Activated CD8-positive, alpha-beta T cell treated with anti-CD3 and anti-CD28 coated beads, Interleukin-2, amount 10 ng/mL, durations not matched to agents 7 days and 5 days (primary cell): ENCODE measurements at regions of chr12 and their contacts with region 1.

Region 1: GRCh38 chr12:98754095-98754494 is 109.0 kb downstream of the APAF1 start:
- DNase-seq: no peak
- ATAC-seq: peak; percentile 51
- H3K4me3 Mint-ChIP-seq: no peak overlapping the region
- H3K27ac Mint-ChIP-seq: no peak overlapping the region
- H3K4me1 Mint-ChIP-seq: no peaks in the 10 kb centered on the region
- H3K27me3 Mint-ChIP-seq: peaks cover 5% of the 10 kb centered on the region

Region 2: DNA sequence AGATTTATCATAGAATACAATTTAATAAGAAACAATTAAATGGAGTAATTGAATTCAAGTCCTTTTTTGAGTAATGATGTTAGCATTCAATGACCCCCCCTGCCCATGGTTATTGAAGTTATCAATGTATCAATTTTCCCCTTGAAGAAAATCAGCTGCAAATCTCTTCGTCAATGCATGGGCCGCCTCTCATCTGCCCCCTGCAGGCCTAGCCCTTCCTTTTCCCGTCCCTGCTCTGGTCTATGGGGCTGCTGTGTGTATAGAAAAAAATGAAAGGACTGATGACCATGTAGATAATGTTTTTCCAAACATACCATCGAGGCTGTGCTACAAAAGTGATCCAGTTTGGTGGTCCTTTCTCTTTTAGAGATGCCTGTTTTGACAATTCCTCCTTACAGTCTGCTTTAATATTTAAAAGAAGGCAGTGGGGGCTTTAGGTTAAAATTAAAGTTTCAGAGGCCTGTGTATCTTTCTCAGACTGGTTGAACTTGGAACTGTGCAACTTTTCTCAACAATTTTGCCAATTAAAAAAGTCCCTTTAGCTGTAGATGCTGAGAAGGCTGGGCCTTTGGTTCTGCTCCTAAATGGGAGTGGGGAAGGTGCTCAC is 10.6 kb before region 1 on chr12:
- CTCF ChIA-PET with region 1: interaction called, 34 read pairs
- POLR2A ChIA-PET with region 1: no interaction called
- DNase-seq: peak; percentile 55
- ATAC-seq: peak; percentile 50
- H3K4me3 Mint-ChIP-seq: no peak overlapping the region
- H3K27ac Mint-ChIP-seq: no peak overlapping the region
- H3K4me1 Mint-ChIP-seq: peaks cover 12% of the 10 kb centered on the region
- H3K27me3 Mint-ChIP-seq: peaks cover 27% of the 10 kb centered on the region

Region 3: GRCh38 chr12:98780261-98780660 is 26.2 kb after region 1 on chr12:
- CTCF ChIA-PET with region 1: no interaction called
- POLR2A ChIA-PET with region 1: no interaction called
- DNase-seq: no peak
- ATAC-seq: no peak
- H3K4me3 Mint-ChIP-seq: no peak overlapping the region
- H3K27ac Mint-ChIP-seq: no peak overlapping the region
- H3K4me1 Mint-ChIP-seq: no peaks in the 10 kb centered on the region
- H3K27me3 Mint-ChIP-seq: peaks cover 14% of the 10 kb centered on the region